ENCODE measurements at regions of chr6 and their contacts with region 1.

Region 1: GRCh38 chr6:4085332-4085700 is 6.4 kb upstream of the FAM217A start:
- DNase-seq: no peak
- ATAC-seq: no peak
- H3K4me3 Mint-ChIP-seq: no peak overlapping the region
- H3K27ac Mint-ChIP-seq: no peak overlapping the region
- H3K4me1 Mint-ChIP-seq: no peaks in the 10 kb centered on the region
- H3K27me3 Mint-ChIP-seq: no peaks in the 10 kb centered on the region

Region 2: GRCh38 chr6:3102875-3103274 is 982.4 kb before region 1 on chr6:
- CTCF ChIA-PET with region 1: no interaction called
- POLR2A ChIA-PET with region 1: interaction called, 12 read pairs
- intact Hi-C with region 1: no loop called
- DNase-seq: no peak
- ATAC-seq: peak; percentile 91
- H3K4me3 Mint-ChIP-seq: no peak overlapping the region
- H3K27ac Mint-ChIP-seq: no peak overlapping the region
- H3K4me1 Mint-ChIP-seq: peaks cover 9% of the 10 kb centered on the region
- H3K27me3 Mint-ChIP-seq: no peaks in the 10 kb centered on the region

Region 3: DNA sequence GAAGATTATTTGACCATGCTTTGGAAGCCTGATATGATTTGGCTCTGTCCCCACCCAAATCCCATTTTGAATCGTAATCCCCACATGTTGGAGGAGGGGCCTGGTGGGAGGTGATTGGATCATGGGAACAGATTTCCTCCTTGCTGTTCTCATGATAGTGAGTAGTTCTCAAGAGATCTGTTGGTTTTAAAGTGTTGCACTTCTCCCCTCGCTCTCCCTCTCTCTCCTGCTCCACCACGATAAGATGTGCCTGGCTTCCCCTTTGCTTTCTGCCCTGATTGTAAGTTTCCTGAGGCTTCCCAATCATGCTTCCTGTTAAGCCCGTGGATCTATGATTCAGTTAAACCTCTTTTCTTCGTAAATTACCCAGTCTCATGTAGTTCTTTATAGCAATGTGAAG is 15.3 kb after region 1 on chr6:
- CTCF ChIA-PET with region 1: no interaction called
- POLR2A ChIA-PET with region 1: no interaction called
- intact Hi-C with region 1: no loop called
- DNase-seq: no peak
- ATAC-seq: no peak
- H3K4me3 Mint-ChIP-seq: no peak overlapping the region
- H3K27ac Mint-ChIP-seq: no peak overlapping the region
- H3K4me1 Mint-ChIP-seq: no peaks in the 10 kb centered on the region
- H3K27me3 Mint-ChIP-seq: no peaks in the 10 kb centered on the region

Region 4: DNA sequence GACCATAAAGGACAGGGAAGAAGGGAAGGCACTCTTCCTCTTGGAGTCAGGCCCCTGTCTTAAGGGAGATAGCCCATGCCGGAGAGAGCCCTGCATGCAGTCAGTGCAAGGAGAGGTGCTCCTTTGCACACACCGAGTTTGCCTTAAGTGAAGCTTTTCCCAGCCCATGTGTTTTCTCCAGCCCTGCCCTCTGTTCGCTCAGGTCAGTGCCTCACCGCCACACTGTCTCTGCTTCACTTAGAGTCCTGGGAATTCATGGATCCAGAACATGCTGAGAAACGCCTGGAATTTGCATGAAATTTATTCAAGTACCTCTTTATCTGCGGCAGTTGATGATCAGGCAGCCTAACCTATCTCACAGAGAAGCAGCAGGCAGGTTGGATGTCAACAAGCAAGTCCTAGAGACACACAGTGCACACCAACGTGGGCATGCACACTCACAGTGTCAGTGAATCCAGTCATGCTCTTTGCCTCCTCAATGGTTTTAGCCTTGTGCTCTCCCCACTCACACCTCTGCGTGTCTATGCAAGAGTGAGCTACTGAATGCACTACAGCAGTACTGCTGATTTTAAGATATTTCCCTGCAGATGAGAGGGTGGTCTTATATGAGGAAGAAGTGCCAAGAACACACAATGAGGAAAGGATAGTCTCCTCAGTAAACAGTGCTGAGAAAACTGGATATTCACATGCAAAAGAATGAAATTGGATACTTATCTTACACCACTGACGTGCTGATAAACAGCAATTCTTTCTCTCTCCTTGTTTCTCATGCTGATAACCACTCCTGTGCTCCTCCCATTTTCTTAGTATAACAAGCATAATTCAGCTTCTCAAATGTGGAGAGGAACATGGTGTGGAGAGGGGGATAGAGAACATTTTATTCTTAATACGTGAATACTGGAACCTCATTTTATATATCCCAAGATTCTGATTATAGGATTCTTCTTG is 395.7 kb after region 1 on chr6:
- CTCF ChIA-PET with region 1: no interaction called
- POLR2A ChIA-PET with region 1: no interaction called
- intact Hi-C with region 1: no loop called
- DNase-seq: no peak
- ATAC-seq: no peak
- H3K4me3 Mint-ChIP-seq: no peak overlapping the region
- H3K27ac Mint-ChIP-seq: no peak overlapping the region
- H3K4me1 Mint-ChIP-seq: no peaks in the 10 kb centered on the region
- H3K27me3 Mint-ChIP-seq: peaks cover 28% of the 10 kb centered on the region